CD8-positive, alpha-beta T cell (primary cell): ENCODE measurements at regions of chr12 and their contacts with region 1.

Region 1: DNA sequence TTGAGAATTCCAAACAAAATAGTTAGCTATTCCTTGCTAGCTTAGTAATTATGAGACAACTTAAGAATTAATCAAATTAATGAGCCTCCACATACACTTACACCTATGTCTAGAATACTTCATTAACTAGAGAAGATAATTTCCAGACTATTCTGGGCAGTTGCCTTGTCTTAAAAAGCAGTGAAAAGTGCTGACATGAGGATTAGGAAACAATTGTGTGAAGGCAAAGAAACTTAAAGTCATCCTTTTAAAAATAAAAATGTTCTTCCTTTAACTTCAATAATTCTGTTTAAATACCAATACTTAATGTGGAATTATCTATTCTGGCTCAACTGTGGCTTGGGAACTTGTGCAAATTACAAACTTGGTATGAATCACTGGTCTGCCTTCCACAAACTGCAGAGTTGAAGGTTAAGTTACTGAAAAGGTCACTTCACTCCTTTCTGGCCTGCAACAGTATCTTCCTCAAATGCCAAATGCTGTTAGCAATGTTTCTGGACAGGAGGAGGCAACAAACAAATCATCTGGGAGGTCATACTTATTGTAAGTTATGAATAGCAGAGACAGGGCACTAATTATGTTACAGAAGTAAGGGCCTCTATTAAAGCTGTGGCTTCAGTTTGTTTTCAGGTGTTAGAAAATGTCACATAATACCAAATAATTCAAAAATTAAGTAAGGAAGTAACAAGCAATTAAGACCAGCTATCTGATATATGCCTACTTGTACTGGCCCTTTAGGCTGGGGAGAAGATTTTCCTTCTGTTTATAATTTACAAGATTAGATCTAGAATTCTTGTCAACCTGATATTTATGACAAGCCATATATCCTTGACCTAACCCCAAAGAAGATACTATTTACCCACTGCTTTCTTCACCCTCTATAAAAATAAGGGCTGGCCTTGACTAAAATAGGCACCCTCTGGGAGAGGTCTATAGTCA is 19.1 kb downstream of the PPTC7 start:
- DNase-seq: no peak
- ATAC-seq: no peak
- H3K4me3 ChIP-seq: no peak overlapping the region
- H3K4me3 Mint-ChIP-seq: no peak overlapping the region
- H3K27ac ChIP-seq: peak overlapping the region; percentile 9 to 61
- H3K27ac Mint-ChIP-seq: peak overlapping the region; percentile 82
- H3K4me1 ChIP-seq: peaks cover 61% of the 10 kb centered on the region
- H3K4me1 Mint-ChIP-seq: peaks cover 72% of the 10 kb centered on the region
- H3K27me3 ChIP-seq: no peaks in the 10 kb centered on the region
- H3K27me3 Mint-ChIP-seq: no peaks in the 10 kb centered on the region
- CTCF ChIP-seq: no peak

Region 2: GRCh38 chr12:110549716-110550115 is 14.3 kb before region 1 on chr12:
- CTCF ChIA-PET with region 1: interaction called, 17 read pairs
- POLR2A ChIA-PET with region 1: interaction called, 5 read pairs
- intact Hi-C with region 1: no loop called
- DNase-seq: no peak
- ATAC-seq: no peak
- H3K4me3 ChIP-seq: no peak overlapping the region
- H3K4me3 Mint-ChIP-seq: no peak overlapping the region
- H3K27ac ChIP-seq: no peak overlapping the region
- H3K27ac Mint-ChIP-seq: no peak overlapping the region
- H3K4me1 ChIP-seq: no peaks in the 10 kb centered on the region
- H3K4me1 Mint-ChIP-seq: peaks cover 30% of the 10 kb centered on the region
- H3K27me3 ChIP-seq: no peaks in the 10 kb centered on the region
- H3K27me3 Mint-ChIP-seq: no peaks in the 10 kb centered on the region
- CTCF ChIP-seq: no peak

Region 3: DNA sequence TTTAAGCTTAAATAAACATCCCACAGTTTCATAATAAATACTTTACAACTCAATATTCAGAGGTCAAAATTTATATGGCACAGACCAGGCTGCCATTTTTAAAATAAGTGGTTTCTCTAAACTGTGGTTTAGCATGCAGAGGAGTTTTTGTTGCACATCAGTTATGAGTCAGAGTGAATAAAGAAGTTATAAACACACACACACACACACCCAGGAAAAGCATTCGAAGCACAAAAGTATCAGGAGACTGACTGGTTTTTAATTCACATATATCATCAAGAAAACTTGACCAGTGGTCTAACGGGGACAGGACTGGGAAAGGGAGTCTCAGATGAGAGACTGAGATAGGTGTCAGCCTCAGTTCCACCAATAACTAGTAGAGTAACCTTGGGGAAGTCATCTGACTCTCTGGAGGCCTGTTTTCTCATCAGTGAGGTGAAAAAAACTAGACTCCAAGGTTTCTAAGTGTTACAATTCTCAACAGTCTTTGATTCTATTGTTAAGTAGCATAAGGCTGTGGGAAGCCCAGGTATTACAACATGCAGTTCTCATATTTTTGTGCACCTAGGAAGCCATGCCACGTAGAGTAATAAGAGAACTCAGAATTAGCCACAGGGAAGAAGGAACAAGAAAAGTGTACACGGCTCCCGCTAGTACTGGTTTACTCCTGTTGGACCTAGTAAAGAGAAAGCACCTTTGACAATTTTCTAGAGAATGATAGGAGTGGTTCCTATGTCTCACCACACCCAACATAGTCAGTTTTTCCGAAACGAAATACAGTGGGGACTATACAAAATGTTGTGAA is 13.9 kb after region 1 on chr12:
- CTCF ChIA-PET with region 1: interaction called, 7 read pairs
- POLR2A ChIA-PET with region 1: interaction called, 4 read pairs
- intact Hi-C with region 1: loop called (anchors 1 to 2 kb)
- DNase-seq: peak in 8 of 9 experiments; percentile 11 to 73 (median 36)
- ATAC-seq: peak; percentile 37
- H3K4me3 ChIP-seq: peak overlapping the region; percentile 16 to 26
- H3K4me3 Mint-ChIP-seq: peak overlapping the region; percentile 76
- H3K27ac ChIP-seq: peak overlapping the region; percentile 44 to 93
- H3K27ac Mint-ChIP-seq: peak overlapping the region; percentile 88
- H3K4me1 ChIP-seq: peaks cover 58% of the 10 kb centered on the region
- H3K4me1 Mint-ChIP-seq: peaks cover 78% of the 10 kb centered on the region
- H3K27me3 ChIP-seq: no peaks in the 10 kb centered on the region
- H3K27me3 Mint-ChIP-seq: no peaks in the 10 kb centered on the region
- CTCF ChIP-seq: no peak